ENCODE measurements at regions of chr18 and their contacts with region 1.

Region 1: GRCh38 chr18:74196220-74197119 is 48.1 kb downstream of the TIMM21 start:
- DNase-seq: no peak
- H3K4me3 ChIP-seq: peak overlapping the region; percentile 29
- H3K27ac ChIP-seq: no peak overlapping the region
- H3K4me1 ChIP-seq: peaks cover 4% of the 10 kb centered on the region
- H3K27me3 ChIP-seq: peaks cover 19% of the 10 kb centered on the region
- CTCF ChIP-seq: peak; percentile 88

Region 2: GRCh38 chr18:74023220-74023619 is 173.2 kb before region 1 on chr18:
- intact Hi-C with region 1: no loop called
- DNase-seq: no peak
- H3K4me3 ChIP-seq: no peak overlapping the region
- H3K27ac ChIP-seq: no peak overlapping the region
- H3K4me1 ChIP-seq: no peaks in the 10 kb centered on the region
- H3K27me3 ChIP-seq: peaks cover 10% of the 10 kb centered on the region
- CTCF ChIP-seq: no peak

Region 3: GRCh38 chr18:74342416-74343043 is 146.1 kb after region 1 on chr18:
- intact Hi-C with region 1: loop called (anchors 5 kb)
- DNase-seq: no peak
- H3K4me3 ChIP-seq: no peak overlapping the region
- H3K27ac ChIP-seq: no peak overlapping the region
- H3K4me1 ChIP-seq: no peaks in the 10 kb centered on the region
- H3K27me3 ChIP-seq: no peaks in the 10 kb centered on the region
- CTCF ChIP-seq: peak; percentile 83